Dorsolateral prefrontal cortex (tissue), 120 donors: ENCODE measurements at regions of chr13 and their contacts with region 1.

Region 1: DNA sequence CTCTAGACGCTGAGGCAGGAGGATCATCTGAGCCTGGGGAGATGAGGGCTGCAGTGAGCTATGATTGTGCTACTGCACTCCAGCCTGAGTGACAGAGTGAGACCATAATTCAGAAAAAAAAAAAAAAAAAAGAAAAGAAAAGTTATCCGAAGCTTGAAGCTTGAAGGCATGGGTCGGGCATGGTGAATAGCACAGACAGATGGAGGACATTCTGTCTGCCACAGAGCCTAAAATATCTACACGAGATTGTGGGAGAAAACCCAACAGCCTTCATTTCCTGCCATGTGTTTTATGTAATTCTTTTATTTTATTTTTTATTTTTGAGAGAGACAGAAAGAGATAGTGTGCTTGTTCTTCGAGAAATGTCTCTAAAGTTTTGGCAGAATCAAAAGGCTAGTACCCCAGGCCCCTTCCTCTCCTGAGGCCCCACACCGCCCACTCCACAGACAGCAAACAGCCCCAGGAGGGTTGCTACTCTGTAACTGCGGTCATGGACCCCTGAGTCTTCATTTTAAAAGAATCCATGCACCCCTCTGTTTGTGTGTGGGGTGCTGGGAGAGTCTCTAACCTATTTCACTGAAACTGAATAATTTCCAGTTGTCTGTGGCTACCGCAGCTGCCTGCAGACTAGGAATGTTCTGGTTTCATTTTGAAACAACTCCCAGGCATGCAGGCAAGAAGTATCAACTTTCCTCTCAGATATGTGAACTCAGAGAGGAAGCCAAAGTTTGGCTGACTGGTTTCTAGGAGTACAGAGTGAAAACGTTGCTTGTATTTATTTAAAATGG is 38.4 kb upstream of the RCBTB2 start:
- DNase-seq: no peak
- H3K4me3 ChIP-seq: peak overlapping the region in 22 of 59 donors; percentile 0 to 45 (median 22)
- H3K27ac ChIP-seq: peak overlapping the region in 57 of 59 donors; percentile 11 to 87 (median 69)
- H3K27me3 ChIP-seq: no peaks in the 10 kb centered on the region
- CTCF ChIP-seq: no peak

Region 2: DNA sequence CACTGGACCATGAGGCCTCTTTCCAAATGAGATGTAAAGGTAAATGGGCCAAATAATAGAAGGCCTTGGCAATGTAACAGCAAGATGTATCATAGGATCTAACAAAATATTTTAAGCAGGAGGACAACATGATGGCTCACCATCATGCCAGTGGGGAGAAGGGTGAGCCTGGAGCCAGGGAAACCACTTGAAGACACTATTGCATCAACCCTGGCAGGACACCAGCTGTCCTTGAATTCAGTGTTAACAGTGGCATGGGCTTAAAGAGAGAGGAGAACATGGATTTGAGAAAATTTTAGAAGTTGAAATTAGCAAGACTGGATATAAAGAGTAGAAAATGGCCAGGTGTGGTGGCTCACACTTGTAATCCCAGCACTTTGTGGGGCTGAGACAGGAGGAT is 31.8 kb before region 1 on chr13:
- intact Hi-C with region 1: loop called in 1 of 2 experiments (anchors 5 kb)
- DNase-seq: no peak
- H3K4me3 ChIP-seq: no peak overlapping the region
- H3K27ac ChIP-seq: no peak overlapping the region
- H3K27me3 ChIP-seq: no peaks in the 10 kb centered on the region
- CTCF ChIP-seq: no peak